CD4-positive, alpha-beta memory T cell (primary cell): ENCODE measurements at regions of chr1 and their contacts with region 1.

Region 1: GRCh38 chr1:11012250-11013171 is at the start of gene TARDBP:
- DNase-seq: peak; percentile 90 to 95 (median 92)
- H3K4me3 ChIP-seq: peak within 1 kb of the TSS; percentile 55 to 97
- H3K4me3 Mint-ChIP-seq: peak within 1 kb of the TSS; percentile 88 to 96 (median 89)
- H3K27ac ChIP-seq: peak within 1 kb of the TSS; percentile 98
- H3K27ac Mint-ChIP-seq: peak within 1 kb of the TSS; percentile 97 to 98 (median 97)
- H3K4me1 ChIP-seq: peaks cover 44% of the 10 kb centered on the region
- H3K4me1 Mint-ChIP-seq: peaks cover 16 to 41% (median 24%) of the 10 kb centered on the region in 4 donors
- H3K27me3 ChIP-seq: no peaks in the 10 kb centered on the region
- H3K27me3 Mint-ChIP-seq: no peaks in the 10 kb centered on the region
- total RNA-seq, gene TARDBP: 194 to 195 TPM

Region 2: GRCh38 chr1:10986525-10986890 is 26.0 kb before region 1 on chr1:
- CTCF ChIA-PET with region 1: no interaction called
- POLR2A ChIA-PET with region 1: no interaction called
- intact Hi-C with region 1: no loop called
- DNase-seq: no peak
- H3K4me3 ChIP-seq: no peak overlapping the region
- H3K4me3 Mint-ChIP-seq: no peak overlapping the region
- H3K27ac ChIP-seq: no peak overlapping the region
- H3K27ac Mint-ChIP-seq: no peak overlapping the region
- H3K4me1 ChIP-seq: no peaks in the 10 kb centered on the region
- H3K4me1 Mint-ChIP-seq: peaks cover 0 to 10% (median under 1%) of the 10 kb centered on the region in 4 donors
- H3K27me3 ChIP-seq: no peaks in the 10 kb centered on the region
- H3K27me3 Mint-ChIP-seq: peaks cover under 1 to 9% of the 10 kb centered on the region in 2 donors

Region 3: GRCh38 chr1:11059990-11060830 is 47.7 kb after region 1 on chr1 and contains the start of gene SRM:
- CTCF ChIA-PET with region 1: no interaction called
- POLR2A ChIA-PET with region 1: interaction called, 25 read pairs
- intact Hi-C with region 1: loop called (anchors 2 kb)
- DNase-seq: peak; percentile 87 to 93 (median 90)
- H3K4me3 ChIP-seq: peak within 1 kb of the TSS; percentile 57 to 76
- H3K4me3 Mint-ChIP-seq: peak within 1 kb of the TSS; percentile 92 to 96 (median 94)
- H3K27ac ChIP-seq: peak within 1 kb of the TSS; percentile 65
- H3K27ac Mint-ChIP-seq: peak within 1 kb of the TSS; percentile 86 to 96 (median 93)
- H3K4me1 ChIP-seq: peaks cover 26% of the 10 kb centered on the region
- H3K4me1 Mint-ChIP-seq: peaks cover 15 to 42% (median 30%) of the 10 kb centered on the region in 4 donors
- H3K27me3 ChIP-seq: no peaks in the 10 kb centered on the region
- H3K27me3 Mint-ChIP-seq: no peaks in the 10 kb centered on the region
- total RNA-seq, gene SRM: 53.1 to 55.1 TPM

Region 4: GRCh38 chr1:11099310-11100149 is 87.0 kb after region 1 on chr1 and contains the start of gene EXOSC10:
- CTCF ChIA-PET with region 1: no interaction called
- POLR2A ChIA-PET with region 1: interaction called, 15 read pairs
- intact Hi-C with region 1: no loop called
- DNase-seq: peak; percentile 93 to 95 (median 94)
- H3K4me3 ChIP-seq: peak within 1 kb of the TSS; percentile 93 to 96
- H3K4me3 Mint-ChIP-seq: peak within 1 kb of the TSS; percentile 92 to 98 (median 96)
- H3K27ac ChIP-seq: peak within 1 kb of the TSS; percentile 89
- H3K27ac Mint-ChIP-seq: peak within 1 kb of the TSS; percentile 89 to 97 (median 96)
- H3K4me1 ChIP-seq: peaks cover 18% of the 10 kb centered on the region
- H3K4me1 Mint-ChIP-seq: peaks cover 8 to 23% (median 12%) of the 10 kb centered on the region in 4 donors
- H3K27me3 ChIP-seq: no peaks in the 10 kb centered on the region
- H3K27me3 Mint-ChIP-seq: no peaks in the 10 kb centered on the region
- total RNA-seq, gene EXOSC10: 78.9 to 84.4 TPM